AG04449 (cell line): ENCODE measurements at regions of chr14 and their contacts with region 1.

Region 1: DNA sequence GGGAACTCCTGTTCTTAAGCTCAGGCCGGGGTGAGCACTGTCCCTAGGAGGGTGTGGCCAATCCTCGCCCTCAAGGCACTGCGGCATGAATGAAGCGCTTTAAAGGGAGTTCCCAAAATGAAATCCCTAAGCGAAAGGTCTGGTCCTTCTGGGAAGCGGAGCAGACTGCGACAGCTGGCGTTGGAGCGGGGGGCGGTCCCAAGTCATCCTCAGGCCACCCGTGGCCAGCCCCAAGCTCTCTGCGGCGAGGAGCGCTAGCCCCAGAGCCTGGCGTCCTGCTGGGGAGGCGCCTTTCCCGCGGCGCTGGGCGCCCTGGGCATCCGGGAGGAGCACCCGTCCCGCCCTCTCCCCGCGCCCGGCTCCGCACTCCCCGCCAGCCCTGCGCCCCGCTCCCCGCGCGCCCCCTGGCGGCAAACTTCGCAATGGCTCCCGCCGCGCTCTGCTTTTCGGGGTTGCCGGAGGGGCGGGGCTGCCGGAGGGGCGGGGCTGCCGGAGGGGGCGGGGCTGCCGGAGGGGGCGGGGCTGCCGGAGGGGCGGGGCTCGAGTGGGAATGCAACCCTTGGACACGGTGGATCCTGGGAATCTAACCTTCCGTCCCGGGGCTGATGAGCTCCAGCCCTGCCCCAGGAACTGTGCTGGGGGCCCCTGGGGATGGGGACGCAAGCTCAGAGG is 25.4 kb downstream of the ZBTB42 start:
- DNase-seq: no peak
- H3K4me3 ChIP-seq: peak overlapping the region; percentile 76
- CTCF ChIP-seq: peak; percentile 78

Region 2: GRCh38 chr14:104708606-104709268 is 117.6 kb before region 1 on chr14:
- CTCF ChIA-PET with region 1: no interaction called
- POLR2A ChIA-PET with region 1: no interaction called
- DNase-seq: no peak
- H3K4me3 ChIP-seq: no peak overlapping the region
- CTCF ChIP-seq: peak; percentile 95

Region 3: DNA sequence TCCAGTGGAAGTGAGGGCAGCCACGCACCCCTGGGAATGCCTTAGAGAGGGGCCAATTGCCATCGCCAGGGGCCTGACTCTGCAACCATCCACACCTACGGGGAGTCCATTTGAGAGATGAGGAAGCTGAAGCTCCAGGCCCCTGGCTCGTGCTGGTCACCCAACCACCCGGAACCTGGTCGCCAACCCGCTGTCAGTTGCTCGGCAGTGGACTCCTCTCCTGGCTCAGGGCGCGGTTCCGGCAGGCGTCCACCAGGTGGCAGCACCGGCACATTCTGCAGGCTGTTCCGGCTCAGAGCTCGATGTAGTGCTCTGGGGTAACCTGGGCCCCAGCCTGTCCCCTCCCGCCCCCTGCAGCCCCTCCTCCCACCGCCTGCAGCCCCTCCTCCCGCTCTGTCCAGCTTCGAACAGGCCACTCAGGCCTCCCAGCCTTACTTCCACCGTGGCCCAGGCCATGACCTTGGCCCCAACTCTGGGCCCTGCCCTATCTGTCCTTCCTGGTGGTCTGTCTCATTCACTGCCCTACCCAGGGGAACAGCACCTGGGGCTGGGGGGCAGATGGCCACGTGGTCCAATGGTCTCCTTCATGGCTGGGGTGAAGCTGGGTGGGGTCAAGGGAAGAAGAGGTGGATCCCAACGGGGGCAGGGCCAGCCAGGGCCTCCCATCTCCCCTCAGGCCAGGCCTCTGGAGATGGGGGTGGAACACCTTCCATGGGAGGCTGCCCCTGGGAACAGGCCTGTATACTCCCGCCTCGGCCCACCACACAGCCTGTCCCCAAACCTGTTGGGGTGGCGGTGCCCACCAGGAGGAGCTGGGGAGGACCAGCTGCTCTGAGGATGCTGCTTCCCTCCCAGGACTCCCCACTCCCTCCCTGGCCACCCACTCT is 57.6 kb before region 1 on chr14:
- CTCF ChIA-PET with region 1: interaction called, 166 read pairs
- POLR2A ChIA-PET with region 1: interaction called, 4 read pairs
- DNase-seq: no peak
- H3K4me3 ChIP-seq: no peak overlapping the region
- CTCF ChIP-seq: peak; percentile 97

Region 4: DNA sequence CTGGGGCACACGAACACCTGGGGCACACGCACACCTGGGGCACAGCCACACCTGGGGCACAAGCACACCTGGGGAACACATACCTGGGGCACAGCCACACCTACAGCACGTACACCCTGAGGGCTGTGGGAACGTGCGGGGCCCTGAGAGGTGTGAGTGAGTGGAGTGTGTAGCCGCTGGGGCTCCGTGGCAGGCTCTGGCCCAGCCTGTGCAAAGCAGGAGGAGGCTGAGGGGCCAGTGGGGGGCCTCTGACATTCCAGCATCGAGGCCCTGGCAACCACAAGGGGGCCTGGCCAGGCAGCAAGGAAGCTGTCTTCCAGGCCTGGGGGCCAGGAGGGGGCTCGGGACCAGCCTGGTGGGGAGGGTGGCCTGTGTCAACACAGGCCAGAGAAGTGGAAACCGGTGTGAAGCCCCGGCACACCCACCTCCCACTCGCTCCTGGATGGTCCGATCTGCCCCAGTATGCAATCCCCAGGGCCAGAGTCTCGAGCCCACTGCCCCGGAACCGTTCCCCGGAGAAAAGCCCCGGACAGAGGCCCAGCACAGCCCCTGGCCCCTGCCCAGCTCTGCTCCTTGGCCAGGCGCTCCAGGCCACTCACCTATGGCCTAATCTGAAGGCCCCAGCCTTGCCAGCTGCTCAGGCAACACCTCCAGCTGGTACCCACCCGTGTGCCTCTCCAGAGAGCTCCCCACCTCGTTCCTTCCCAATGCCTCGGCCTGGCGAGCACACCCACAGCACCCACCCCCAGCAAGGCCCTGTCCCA is 48.7 kb before region 1 on chr14:
- CTCF ChIA-PET with region 1: interaction called, 14 read pairs
- POLR2A ChIA-PET with region 1: no interaction called
- DNase-seq: no peak
- H3K4me3 ChIP-seq: no peak overlapping the region
- CTCF ChIP-seq: no peak

Region 5: DNA sequence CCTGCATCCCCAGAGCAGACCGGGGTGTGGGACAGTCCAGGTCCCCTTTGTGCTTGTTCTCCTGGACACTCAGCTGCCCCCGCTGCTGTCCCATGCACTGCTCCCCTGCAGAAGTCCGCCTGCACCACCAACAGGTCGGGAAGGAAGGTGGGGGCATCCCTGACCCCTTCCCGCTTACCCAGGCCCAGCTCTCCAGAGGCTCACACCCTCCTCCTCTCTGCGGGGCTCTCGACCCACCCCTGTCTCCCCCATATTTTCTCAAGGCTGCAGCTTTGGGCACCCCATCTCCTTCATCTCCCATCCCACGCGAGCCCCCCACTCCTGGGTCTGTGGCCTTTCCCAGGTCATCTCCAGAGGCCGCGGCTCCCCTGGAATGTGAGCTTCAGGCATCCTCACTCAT is 16.0 kb before region 1 on chr14:
- CTCF ChIA-PET with region 1: interaction called, 16 read pairs
- POLR2A ChIA-PET with region 1: interaction called, 4 read pairs
- DNase-seq: no peak
- H3K4me3 ChIP-seq: no peak overlapping the region
- CTCF ChIP-seq: no peak

Region 6: GRCh38 chr14:104843442-104844305 is 17.3 kb after region 1 on chr14:
- CTCF ChIA-PET with region 1: interaction called, 34 read pairs
- POLR2A ChIA-PET with region 1: no interaction called
- DNase-seq: no peak
- H3K4me3 ChIP-seq: no peak overlapping the region; the same call in 1 of the 2 replicates
- CTCF ChIP-seq: no peak

Region 7: DNA sequence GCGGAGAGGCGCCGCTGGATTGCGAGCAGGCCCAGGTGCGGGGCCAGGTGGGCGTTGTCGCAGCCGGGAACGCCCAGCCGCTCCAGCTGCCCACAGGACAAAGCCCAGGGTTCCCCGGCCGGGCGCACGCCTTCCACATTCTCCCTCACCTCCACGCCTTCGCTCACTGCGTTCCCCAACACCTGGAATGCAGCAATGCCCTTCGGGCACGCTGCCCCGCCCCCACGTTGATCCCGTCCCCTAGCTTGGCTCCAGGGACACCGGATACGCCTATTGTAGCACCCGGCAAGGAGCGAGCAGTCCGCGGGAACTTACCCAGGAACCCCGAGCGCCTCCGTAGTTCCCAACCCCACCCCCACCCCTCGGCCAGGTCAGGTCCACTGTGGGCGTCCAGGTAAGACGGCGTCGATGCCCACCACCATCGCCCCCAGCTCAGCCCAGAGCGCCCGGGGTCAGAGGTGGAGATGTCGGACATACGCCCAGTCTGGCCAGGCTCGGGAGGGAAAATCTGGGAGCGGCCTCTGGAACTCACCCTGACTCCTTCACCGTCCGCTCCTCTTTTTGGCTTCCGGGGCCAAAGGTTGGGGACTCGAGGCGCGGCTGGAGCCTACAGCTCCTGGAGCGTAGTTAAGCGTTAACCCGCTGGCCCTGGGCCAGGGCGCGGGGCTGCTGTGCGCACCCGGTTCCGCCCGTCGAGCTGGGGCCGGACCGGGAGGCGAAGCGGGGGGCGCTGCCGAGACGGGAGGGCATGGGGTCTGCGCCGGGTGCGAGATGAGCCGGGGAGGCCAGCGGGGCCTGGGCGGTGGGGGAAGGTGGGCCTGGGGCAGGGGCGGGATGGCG is 38.1 kb after region 1 on chr14:
- CTCF ChIA-PET with region 1: interaction called, 13 read pairs
- POLR2A ChIA-PET with region 1: no interaction called
- DNase-seq: no peak
- H3K4me3 ChIP-seq: peak overlapping the region; percentile 48
- CTCF ChIP-seq: no peak